Body of pancreas (tissue), 4 donors: ENCODE measurements at regions of chr6 and their contacts with region 1.

Region 1: GRCh38 chr6:13916230-13916944 is 8.4 kb upstream of the RNF182 start:
- DNase-seq: peak in 3 of 4 donors; percentile 37 to 55 (median 48)
- ATAC-seq: peak; percentile 56
- H3K4me3 ChIP-seq: no peak overlapping the region
- H3K27ac ChIP-seq: no peak overlapping the region
- H3K4me1 ChIP-seq: peaks cover 4% of the 10 kb centered on the region
- H3K27me3 ChIP-seq: peaks cover 0 to 7% of the 10 kb centered on the region in 2 donors
- CTCF ChIP-seq: no peak
- POLR2A ChIP-seq: no peak

Region 2: DNA sequence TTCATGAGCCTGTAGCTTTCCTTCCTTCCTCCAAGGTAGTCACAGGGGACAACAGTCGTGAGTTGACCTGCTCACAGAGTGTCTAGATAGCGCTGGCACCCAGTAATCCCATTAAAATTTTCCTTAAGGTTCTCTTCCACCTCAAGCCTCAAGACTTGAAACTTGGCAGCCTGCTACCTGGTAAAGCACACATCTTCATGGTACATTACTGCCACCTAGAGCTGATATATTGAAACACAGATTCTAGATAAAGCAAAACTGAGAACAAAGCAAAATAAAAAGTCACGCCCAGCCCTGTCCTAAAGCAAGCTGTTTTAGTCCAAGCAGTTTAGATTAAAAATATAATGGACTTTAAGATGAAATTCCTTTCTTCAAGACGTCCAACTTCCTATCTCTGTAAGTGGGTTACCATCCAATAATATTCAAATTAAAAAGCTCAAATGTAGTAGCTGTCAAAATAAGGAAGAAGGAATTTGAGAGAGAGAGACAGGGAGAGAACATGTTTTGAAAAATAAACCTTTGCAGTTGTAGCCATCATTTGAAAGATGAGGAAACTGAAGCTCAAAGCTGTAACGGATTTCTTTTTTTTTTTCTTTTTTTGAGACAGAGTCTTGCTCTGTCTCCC is 150.5 kb after region 1 on chr6:
- intact Hi-C with region 1: loop called (anchors 10 kb)
- DNase-seq: peak in 3 of 4 donors; percentile 36 to 48 (median 43)
- ATAC-seq: peak; percentile 68
- H3K4me3 ChIP-seq: no peak overlapping the region
- H3K27ac ChIP-seq: no peak overlapping the region
- H3K4me1 ChIP-seq: no peaks in the 10 kb centered on the region
- H3K27me3 ChIP-seq: no peaks in the 10 kb centered on the region
- CTCF ChIP-seq: peak; percentile 27 to 84 (median 69)
- POLR2A ChIP-seq: no peak